ENCODE measurements at regions of chr2 and their contacts with region 1.

Region 1: DNA sequence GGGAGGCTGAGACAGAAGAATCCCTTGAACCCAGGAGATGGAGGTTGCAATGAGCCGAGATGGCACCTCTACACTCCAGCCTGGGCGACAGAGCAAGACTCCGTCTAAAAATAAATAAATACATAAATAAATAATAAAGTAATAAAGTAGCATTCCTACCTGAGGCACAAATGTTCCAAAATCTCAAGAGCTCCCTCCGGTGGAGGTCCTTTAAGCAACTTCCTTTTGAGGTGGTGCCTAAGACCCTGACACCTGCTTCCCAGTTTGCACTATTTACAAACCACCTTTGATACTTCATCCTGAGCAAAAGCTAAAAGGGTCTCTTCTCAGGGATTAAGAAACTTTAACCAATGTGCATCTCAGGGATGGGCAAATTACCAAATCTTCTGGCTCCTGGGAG is 505.1 kb downstream of the CNTNAP5 start:
- DNase-seq: no peak
- H3K4me3 ChIP-seq: no peak overlapping the region
- H3K27ac ChIP-seq: no peak overlapping the region
- H3K4me1 ChIP-seq: peaks cover 0 to 2% (median 0%) of the 10 kb centered on the region in 4 experiments; a peak in 1 of 7 replicates
- H3K27me3 ChIP-seq: no peaks in the 10 kb centered on the region
- CTCF ChIP-seq: peak in 2 of 3 experiments; percentile 9 to 14; a peak in 2 of 4 replicates
- EP300 ChIP-seq: no peak
- POLR2A ChIP-seq: no peak
- RAD21 ChIP-seq: peak; percentile 27 to 52; a peak in 3 of 4 replicates

Region 2: DNA sequence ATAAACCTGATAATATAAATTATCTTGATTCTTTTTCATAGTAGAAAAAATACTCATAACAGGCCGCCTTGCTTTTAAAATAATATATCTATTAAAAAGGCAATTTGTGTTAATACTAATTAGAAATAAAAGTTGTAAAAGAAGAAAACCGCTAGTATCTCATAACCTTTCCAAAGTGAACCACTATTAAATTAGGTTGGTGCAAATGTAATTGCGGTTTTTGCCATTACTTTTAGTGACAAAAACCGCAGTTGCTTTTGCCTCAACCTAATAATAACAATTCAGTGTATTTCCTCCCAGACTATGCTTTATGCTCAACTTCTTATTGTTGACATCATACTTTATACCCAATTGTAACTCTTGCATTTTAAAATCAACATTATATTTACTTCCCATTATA is 56.4 kb before region 1 on chr2:
- CTCF ChIA-PET with region 1: no interaction called
- POLR2A ChIA-PET with region 1: no interaction called
- DNase-seq: no peak
- H3K4me3 ChIP-seq: no peak overlapping the region
- H3K27ac ChIP-seq: no peak overlapping the region
- H3K4me1 ChIP-seq: no peaks in the 10 kb centered on the region
- H3K27me3 ChIP-seq: no peaks in the 10 kb centered on the region
- CTCF ChIP-seq: no peak
- EP300 ChIP-seq: no peak
- POLR2A ChIP-seq: no peak
- RAD21 ChIP-seq: no peak

Region 3: GRCh38 chr2:124542932-124543640 is 12.9 kb after region 1 on chr2:
- CTCF ChIA-PET with region 1: interaction called, 14 read pairs
- POLR2A ChIA-PET with region 1: no interaction called
- DNase-seq: no peak
- H3K4me3 ChIP-seq: no peak overlapping the region
- H3K27ac ChIP-seq: no peak overlapping the region
- H3K4me1 ChIP-seq: peaks cover 0 to 8% (median 2%) of the 10 kb centered on the region in 4 experiments; a peak in 3 of 7 replicates
- H3K27me3 ChIP-seq: no peaks in the 10 kb centered on the region
- CTCF ChIP-seq: no peak
- EP300 ChIP-seq: no peak
- POLR2A ChIP-seq: no peak
- RAD21 ChIP-seq: no peak

Region 4: GRCh38 chr2:124572934-124573634 is 42.9 kb after region 1 on chr2:
- CTCF ChIA-PET with region 1: no interaction called
- POLR2A ChIA-PET with region 1: no interaction called
- DNase-seq: no peak
- H3K4me3 ChIP-seq: no peak overlapping the region
- H3K27ac ChIP-seq: no peak overlapping the region
- H3K4me1 ChIP-seq: no peaks in the 10 kb centered on the region
- H3K27me3 ChIP-seq: no peaks in the 10 kb centered on the region
- CTCF ChIP-seq: no peak
- EP300 ChIP-seq: no peak
- POLR2A ChIP-seq: no peak
- RAD21 ChIP-seq: no peak

Region 5: DNA sequence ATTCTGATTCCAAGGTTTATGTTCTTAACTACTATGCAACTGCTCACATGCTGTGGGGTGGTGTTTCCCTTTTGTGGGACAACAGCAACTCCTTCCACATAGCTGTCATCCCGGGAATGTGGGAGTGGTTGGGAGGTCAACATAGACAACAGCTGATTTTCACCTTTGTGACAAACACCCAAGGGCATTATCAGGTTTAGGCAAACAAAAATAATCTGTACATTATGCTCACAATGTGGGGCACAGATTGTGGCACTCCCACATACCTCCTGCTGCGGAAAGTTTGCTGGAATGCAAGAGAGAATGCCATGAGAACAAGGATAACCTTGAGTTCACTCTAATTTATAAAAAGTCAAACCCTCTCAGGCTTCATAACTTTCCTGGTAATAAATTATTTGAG is 77.5 kb after region 1 on chr2:
- CTCF ChIA-PET with region 1: no interaction called
- POLR2A ChIA-PET with region 1: no interaction called
- DNase-seq: no peak
- H3K4me3 ChIP-seq: no peak overlapping the region
- H3K27ac ChIP-seq: no peak overlapping the region
- H3K4me1 ChIP-seq: peaks cover 0 to 10% (median 0%) of the 10 kb centered on the region in 4 experiments; a peak in 4 of 7 replicates
- H3K27me3 ChIP-seq: no peaks in the 10 kb centered on the region
- CTCF ChIP-seq: no peak
- EP300 ChIP-seq: no peak
- POLR2A ChIP-seq: no peak
- RAD21 ChIP-seq: no peak